H1 (cell line): ENCODE measurements at regions of chr12 and their contacts with region 1.

Region 1: GRCh38 chr12:2183556-2184541 is 131.1 kb downstream of the CACNA1C start:
- DNase-seq: no peak
- H3K4me3 ChIP-seq: no peak overlapping the region
- H3K27ac ChIP-seq: no peak overlapping the region
- H3K4me1 ChIP-seq: peaks cover 0 to 14% (median 6%) of the 10 kb centered on the region in 4 experiments; a peak in 5 of 7 replicates
- H3K27me3 ChIP-seq: no peaks in the 10 kb centered on the region
- CTCF ChIP-seq: peak in 2 of 3 experiments; percentile 22 to 24; a peak in 2 of 4 replicates
- EP300 ChIP-seq: no peak
- POLR2A ChIP-seq: no peak
- RAD21 ChIP-seq: peak; percentile 26 to 49; a peak in 3 of 4 replicates

Region 2: GRCh38 chr12:2198005-2198501 is 14.2 kb after region 1 on chr12:
- CTCF ChIA-PET with region 1: no interaction called
- POLR2A ChIA-PET with region 1: interaction called, 11 read pairs
- DNase-seq: peak; percentile 71 to 72
- H3K4me3 ChIP-seq: peak overlapping the region in 3 of 4 experiments; percentile 3 to 50 (median 7); a peak in 4 of 8 replicates
- H3K27ac ChIP-seq: peak overlapping the region; percentile 9; the same call in 1 of the 2 replicates
- H3K4me1 ChIP-seq: peaks cover 7 to 24% (median 13%) of the 10 kb centered on the region in 4 experiments; a peak in 6 of 7 replicates
- H3K27me3 ChIP-seq: no peaks in the 10 kb centered on the region
- CTCF ChIP-seq: no peak
- EP300 ChIP-seq: 0 out of 3 replicates have a peak, but pooled peaks of 1 of the 2 experiments have one; percentile 29
- POLR2A ChIP-seq: peak in 1 of 2 experiments; percentile 68; a peak in 2 of 3 replicates
- RAD21 ChIP-seq: no peak

Region 3: GRCh38 chr12:2256915-2257314 is 73.1 kb after region 1 on chr12:
- CTCF ChIA-PET with region 1: no interaction called
- POLR2A ChIA-PET with region 1: no interaction called
- DNase-seq: no peak
- H3K4me3 ChIP-seq: no peak overlapping the region
- H3K27ac ChIP-seq: no peak overlapping the region
- H3K4me1 ChIP-seq: peaks cover 0 to 5% (median 2%) of the 10 kb centered on the region in 4 experiments; a peak in 2 of 7 replicates
- H3K27me3 ChIP-seq: no peaks in the 10 kb centered on the region
- CTCF ChIP-seq: no peak
- EP300 ChIP-seq: no peak
- POLR2A ChIP-seq: no peak
- RAD21 ChIP-seq: no peak